ENCODE measurements at regions of chr22 and their contacts with region 1.

Region 1: DNA sequence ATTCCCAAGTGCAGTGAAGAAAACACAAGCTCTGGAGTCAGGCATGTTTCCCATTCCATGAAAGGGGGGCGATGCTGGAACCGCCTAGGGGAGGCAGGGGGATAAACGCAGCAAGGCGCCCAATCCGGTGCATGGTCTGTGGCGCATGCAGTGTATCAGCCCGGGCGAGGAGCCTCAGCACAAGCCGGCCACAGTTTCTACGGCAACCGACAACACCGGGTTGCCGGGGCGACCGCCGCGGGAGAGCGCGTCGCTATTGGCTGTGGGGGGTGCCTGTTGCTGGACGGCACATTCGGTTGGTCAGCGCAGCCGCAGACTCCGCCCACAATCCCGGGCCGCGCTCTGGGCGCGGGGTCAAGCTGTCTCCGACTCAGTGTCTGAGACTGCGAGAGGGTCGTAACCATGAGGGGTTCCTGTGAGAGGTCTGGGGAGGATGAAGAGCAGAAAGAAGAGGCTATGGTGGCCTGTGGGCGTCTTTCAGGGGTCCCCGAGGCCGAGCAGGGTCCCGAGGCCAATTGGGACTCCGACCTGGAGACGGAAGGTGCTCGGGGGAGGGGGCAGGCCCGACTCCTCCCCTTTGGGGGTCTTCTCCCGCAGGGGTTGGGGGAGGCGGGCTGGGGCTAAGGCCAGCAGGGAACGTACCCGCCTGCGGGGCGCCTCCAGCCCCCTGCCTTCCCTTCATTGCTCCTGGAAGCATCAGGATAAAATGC is at the start of gene LRRC74B:
- DNase-seq: peak; percentile 87
- H3K4me3 ChIP-seq: peak within 1 kb of the TSS in 2 of 3 experiments; percentile 25 to 43
- H3K27ac ChIP-seq: peak within 1 kb of the TSS; percentile 33
- H3K4me1 ChIP-seq: peaks cover 24% of the 10 kb centered on the region
- H3K27me3 ChIP-seq: no peaks in the 10 kb centered on the region
- CTCF ChIP-seq: no peak
- total RNA-seq, gene LRRC74B: not detected

Region 2: DNA sequence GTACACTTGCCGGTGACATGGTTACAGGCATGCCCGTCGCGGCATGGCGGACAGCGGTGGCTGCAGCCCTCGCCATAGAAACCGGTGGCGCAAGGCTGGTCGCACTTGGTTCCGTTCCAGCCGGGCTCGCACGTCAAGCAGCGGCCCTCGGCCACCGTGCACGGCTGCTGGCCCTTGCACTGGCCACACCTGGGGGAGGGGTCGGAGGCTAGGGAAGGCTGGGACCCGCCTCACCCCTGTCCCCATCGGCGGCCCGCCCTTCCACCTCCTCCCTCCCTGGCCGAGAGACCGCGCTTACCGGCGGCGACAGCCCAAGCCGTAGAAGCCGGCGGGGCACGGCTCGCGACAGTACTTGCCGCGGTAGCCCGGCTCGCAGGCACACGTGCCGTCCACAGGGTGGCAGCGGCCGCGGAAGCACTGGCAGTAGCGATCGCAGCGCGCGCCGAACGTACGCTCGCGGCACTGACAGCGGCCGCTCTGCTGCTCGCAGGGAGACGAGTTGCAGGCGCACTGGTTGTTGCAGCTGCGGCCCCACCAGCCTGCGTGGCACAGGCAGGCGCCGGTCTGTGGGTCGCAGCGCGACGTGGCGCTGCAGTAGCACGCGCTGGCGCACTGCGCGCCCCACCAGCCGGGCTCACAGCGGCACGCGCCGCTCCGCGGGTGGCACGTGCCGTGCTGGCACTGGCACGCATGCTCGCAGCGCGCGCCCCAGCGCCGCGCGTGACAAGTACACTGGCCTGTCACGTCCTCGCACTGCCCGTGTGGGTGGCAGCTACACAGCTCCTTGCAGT is 614.8 kb before region 1 on chr22:
- CTCF ChIA-PET with region 1: no interaction called
- dilution Hi-C with region 1: no loop called
- in situ Hi-C with region 1: no loop called
- intact Hi-C with region 1: no loop called
- DNase-seq: peak; percentile 48
- H3K4me3 ChIP-seq: peak overlapping the region in 2 of 3 experiments; percentile 14 to 37
- H3K27ac ChIP-seq: no peak overlapping the region
- H3K4me1 ChIP-seq: peaks cover 14% of the 10 kb centered on the region
- H3K27me3 ChIP-seq: peaks cover 7% of the 10 kb centered on the region
- CTCF ChIP-seq: peak; percentile 22 to 50

Region 3: GRCh38 chr22:20867179-20868024 is 178.3 kb before region 1 on chr22:
- CTCF ChIA-PET with region 1: no interaction called
- dilution Hi-C with region 1: no loop called
- in situ Hi-C with region 1: no loop called
- intact Hi-C with region 1: no loop called
- DNase-seq: no peak
- H3K4me3 ChIP-seq: no peak overlapping the region
- H3K27ac ChIP-seq: no peak overlapping the region
- H3K4me1 ChIP-seq: peaks cover 4% of the 10 kb centered on the region
- H3K27me3 ChIP-seq: no peaks in the 10 kb centered on the region
- CTCF ChIP-seq: no peak

Region 4: DNA sequence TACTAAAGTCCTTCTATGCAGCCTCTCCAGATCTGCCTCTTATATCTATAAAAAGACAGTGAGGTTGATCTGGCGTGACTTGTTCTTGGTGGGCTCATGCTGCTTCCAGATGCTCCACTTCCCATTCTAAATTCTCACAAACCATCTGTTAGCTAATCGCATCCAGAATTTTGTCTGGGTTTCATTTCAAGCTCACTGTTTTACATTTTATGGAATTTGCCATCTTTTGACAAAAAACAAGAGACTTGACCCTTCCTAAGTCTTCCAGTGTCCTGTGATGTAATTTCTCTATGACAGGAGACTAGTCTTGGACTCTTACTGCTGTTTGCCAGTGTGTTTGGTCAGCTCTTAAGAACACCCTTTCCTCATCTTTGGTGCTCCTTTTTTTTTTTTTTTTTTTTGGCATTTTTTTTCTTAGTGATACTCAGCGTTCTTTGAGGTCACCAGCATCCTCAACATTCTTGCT is 105.5 kb before region 1 on chr22:
- CTCF ChIA-PET with region 1: no interaction called
- dilution Hi-C with region 1: no loop called
- in situ Hi-C with region 1: no loop called
- intact Hi-C with region 1: no loop called
- DNase-seq: no peak
- H3K4me3 ChIP-seq: no peak overlapping the region
- H3K27ac ChIP-seq: no peak overlapping the region
- H3K4me1 ChIP-seq: peaks cover 16% of the 10 kb centered on the region
- H3K27me3 ChIP-seq: no peaks in the 10 kb centered on the region
- CTCF ChIP-seq: no peak

Region 5: GRCh38 chr22:20965104-20965887 is 80.4 kb before region 1 on chr22:
- CTCF ChIA-PET with region 1: no interaction called
- dilution Hi-C with region 1: no loop called
- in situ Hi-C with region 1: no loop called
- intact Hi-C with region 1: no loop called
- DNase-seq: no peak
- H3K4me3 ChIP-seq: peak overlapping the region in 1 of 3 experiments; percentile 21
- H3K27ac ChIP-seq: no peak overlapping the region
- H3K4me1 ChIP-seq: peaks cover 2% of the 10 kb centered on the region
- H3K27me3 ChIP-seq: peaks cover 2% of the 10 kb centered on the region
- CTCF ChIP-seq: no peak

Region 6: DNA sequence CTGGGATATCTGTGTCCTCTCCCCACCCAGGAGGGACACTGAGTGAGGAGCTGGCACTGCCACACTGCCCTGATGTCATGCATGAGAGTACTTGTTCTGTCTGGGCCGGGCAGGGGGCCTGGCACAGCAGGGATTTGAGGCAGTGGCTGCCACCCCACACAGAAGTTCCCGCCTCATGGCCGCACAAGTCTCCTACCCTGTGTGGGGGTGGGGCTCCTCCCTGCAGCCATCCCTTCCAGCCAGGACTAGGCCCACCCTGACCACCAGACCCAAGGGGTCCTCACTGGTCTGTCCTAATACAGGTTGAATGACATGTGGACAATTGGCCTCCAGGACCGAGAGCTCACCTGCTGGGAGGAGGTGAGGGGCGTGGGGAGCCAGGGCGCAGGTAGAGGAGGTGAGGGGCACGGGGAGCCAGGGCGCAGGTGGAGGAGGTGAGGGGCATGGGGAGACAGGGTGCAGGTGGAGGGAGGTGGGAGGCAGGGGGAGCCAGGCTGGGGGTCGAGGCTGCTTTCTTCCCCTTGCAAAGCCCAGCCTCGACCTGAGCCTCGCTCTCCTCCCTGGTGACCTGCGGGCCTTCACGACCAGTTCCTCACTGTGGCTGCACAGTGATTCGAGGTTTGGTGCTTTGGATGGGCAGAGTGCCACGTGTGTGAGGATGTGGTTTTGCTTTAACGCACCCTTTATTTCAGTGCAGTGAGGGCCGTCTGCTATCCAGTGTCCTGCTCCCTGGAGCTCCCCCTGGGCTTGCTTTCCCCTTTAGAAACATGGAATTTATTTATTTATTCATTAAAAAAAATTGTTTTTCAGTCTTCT is 56.2 kb before region 1 on chr22:
- CTCF ChIA-PET with region 1: no interaction called
- dilution Hi-C with region 1: loop called (anchors 5 kb)
- in situ Hi-C with region 1: no loop called
- intact Hi-C with region 1: no loop called
- DNase-seq: no peak
- H3K4me3 ChIP-seq: no peak overlapping the region
- H3K27ac ChIP-seq: no peak overlapping the region
- H3K4me1 ChIP-seq: no peaks in the 10 kb centered on the region
- H3K27me3 ChIP-seq: no peaks in the 10 kb centered on the region
- CTCF ChIP-seq: no peak

Region 7: GRCh38 chr22:21031971-21032867 is 13.5 kb before region 1 on chr22 and contains the start of gene SLC7A4:
- CTCF ChIA-PET with region 1: no interaction called
- dilution Hi-C with region 1: no loop called
- in situ Hi-C with region 1: no loop called
- intact Hi-C with region 1: loop called (anchors 1 kb)
- DNase-seq: no peak
- H3K4me3 ChIP-seq: peak within 1 kb of the TSS in 1 of 3 experiments; percentile 8
- H3K27ac ChIP-seq: no peak within 1 kb of the TSS
- H3K4me1 ChIP-seq: peaks cover 11% of the 10 kb centered on the region
- H3K27me3 ChIP-seq: no peaks in the 10 kb centered on the region
- CTCF ChIP-seq: no peak
- total RNA-seq, gene SLC7A4: 1.7 TPM in 1 of 2 donors, not detected in the other

Measured in mammary epithelial cell (primary cell).